Right cardiac atrium (tissue), 5 donors: ENCODE measurements at regions of chr3 and their contacts with region 1.

Region 1: DNA sequence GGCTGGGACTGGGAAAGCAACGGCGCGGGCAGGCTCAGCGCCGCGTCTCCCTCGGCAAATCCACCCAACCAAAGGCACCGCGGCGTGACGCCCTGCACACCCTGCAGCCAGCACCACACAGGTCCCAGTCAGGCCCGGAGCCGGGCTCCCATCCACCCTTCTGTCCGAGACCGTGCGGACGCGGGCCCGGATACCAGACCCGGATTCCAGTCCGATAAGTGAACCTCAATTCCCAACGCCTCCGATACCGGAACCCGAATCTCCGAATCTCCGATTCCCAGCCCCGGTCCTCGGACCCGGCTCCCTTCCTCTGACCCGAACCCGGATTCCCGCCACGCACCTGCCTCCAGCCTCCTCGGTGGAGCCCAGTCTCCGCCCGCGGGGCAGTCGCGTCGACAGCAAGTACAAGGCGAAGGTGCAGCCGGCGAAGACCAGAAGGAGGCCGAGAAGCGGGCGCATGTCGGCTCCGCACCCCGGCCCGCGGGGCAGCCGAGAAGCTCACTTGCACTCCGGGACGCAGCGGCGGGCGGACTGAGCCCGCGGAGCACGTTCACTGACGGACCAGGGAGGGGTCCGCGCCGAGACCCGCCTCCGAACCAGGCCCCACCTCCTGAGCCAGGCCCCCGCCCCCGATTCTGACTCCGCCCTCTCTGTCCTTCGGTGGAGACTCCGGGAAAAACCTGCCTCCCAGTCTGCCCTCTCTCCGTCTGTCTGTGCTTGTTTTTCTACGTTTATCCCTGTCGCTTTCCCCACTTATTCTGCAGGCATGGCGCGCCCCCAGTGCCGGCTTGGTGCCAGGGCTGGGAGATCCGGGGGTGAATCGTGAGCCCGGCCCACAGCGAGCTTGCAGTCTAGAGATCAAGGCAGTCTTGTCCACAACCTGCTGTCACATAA is at the start of gene TMEM41A:
- DNase-seq: peak; percentile 94 to 97 (median 97)
- ATAC-seq: peak; percentile 99 to 100
- H3K4me3 ChIP-seq: peak within 1 kb of the TSS; percentile 56
- H3K27ac ChIP-seq: peak within 1 kb of the TSS; percentile 74
- H3K4me1 ChIP-seq: peaks cover 5% of the 10 kb centered on the region
- H3K27me3 ChIP-seq: no peaks in the 10 kb centered on the region
- total RNA-seq, gene TMEM41A: 10.9 to 11.8 (median 11.6) TPM

Region 2: GRCh38 chr3:185558395-185558794 is 59.6 kb after region 1 on chr3:
- intact Hi-C with region 1: loop called in 2 of 4 experiments (anchors 5 to 10 kb)
- DNase-seq: no peak
- ATAC-seq: peak in 1 of 2 donors; percentile 47
- H3K4me3 ChIP-seq: no peak overlapping the region
- H3K27ac ChIP-seq: no peak overlapping the region
- H3K4me1 ChIP-seq: no peaks in the 10 kb centered on the region
- H3K27me3 ChIP-seq: no peaks in the 10 kb centered on the region